Adrenal gland (tissue), 19 donors: ENCODE measurements at regions of chr1 and their contacts with region 1.

Region 1: DNA sequence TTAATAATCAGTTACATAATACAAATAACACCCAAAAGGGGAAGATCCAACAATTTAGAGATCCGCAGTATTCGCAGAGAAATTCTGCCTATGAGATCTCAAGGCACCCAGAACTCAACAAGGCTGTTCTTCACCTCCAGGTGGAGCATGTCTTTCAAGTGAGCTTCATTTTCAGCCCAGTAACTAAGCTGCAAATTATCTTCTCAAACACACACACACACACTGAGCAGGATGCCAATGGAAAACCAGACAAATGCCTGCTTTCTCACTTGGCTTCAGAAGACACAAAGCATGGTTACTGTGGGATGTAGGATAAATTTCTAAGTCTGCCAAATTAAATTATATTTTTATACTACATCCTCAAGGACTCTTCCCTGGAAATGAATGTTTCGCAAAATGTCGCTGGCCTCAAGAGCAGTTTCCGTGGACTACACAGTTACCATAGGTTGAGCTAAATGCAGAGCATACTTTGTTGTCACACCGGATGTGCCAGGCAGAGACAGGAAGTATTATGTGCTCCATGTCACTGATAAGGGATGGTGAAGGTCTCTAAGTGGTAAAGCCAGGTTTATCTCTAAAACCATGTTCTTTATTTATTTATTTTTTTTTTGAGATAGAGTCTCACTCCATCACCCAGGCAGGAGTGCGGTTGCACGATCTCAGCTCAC is 30.3 kb downstream of the UBR4 start:
- DNase-seq: peak in 2 of 7 donors; percentile 32 to 33
- H3K4me3 ChIP-seq: no peak overlapping the region
- H3K27ac ChIP-seq: no peak overlapping the region
- H3K4me1 ChIP-seq: no peaks in the 10 kb centered on the region
- H3K27me3 ChIP-seq: no peaks in the 10 kb centered on the region
- CTCF ChIP-seq: peak in 5 of 6 experiments; percentile 25 to 48 (median 35)
- POLR2A ChIP-seq: no peak

Region 2: DNA sequence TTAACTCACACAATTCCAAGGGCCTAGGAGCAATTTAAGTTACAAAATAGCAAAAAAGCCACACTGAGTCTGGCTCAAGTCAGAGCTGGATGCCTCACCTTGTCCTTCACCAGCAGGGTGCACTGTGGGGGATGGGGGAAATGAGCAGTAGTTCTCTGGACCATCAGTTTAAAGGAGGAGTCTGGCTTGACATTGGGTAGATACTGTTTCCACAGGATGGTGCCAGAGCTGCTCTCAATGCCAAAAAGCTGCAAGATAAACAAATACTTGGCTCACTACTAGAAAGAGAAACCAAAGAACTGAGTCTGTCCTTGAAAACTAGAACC is 52.8 kb after region 1 on chr1:
- intact Hi-C with region 1: loop called (anchors 5 to 10 kb)
- DNase-seq: peak; percentile 76 to 92 (median 89)
- H3K4me3 ChIP-seq: no peak overlapping the region
- H3K27ac ChIP-seq: peak overlapping the region in 3 of 5 donors; percentile 6 to 60 (median 59)
- H3K4me1 ChIP-seq: peaks cover 5 to 14% of the 10 kb centered on the region in 2 donors
- H3K27me3 ChIP-seq: no peaks in the 10 kb centered on the region
- CTCF ChIP-seq: peak in 3 of 6 experiments; percentile 19 to 35 (median 20)
- POLR2A ChIP-seq: no peak

Region 3: DNA sequence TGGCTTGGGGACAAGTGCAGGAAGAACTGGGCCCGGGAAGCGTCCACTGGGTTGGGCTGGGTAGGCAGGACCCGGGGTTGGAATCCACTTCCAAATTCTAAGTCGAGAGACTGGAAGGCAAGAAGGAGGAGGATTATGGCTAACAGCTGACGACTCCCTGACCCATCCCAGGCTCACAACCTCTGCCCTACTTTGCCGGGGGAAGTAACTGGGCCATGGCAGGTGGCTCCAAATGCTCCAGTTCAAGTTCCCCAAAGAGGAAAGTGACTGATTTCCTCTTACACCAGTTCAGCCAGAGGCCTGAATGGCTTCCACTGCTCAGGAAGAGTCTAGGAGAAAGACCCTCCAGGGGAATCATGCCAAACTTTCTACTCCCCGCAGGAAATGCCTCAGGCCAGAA is 60.1 kb after region 1 on chr1:
- intact Hi-C with region 1: loop called (anchors 5 to 10 kb)
- DNase-seq: no peak
- H3K4me3 ChIP-seq: no peak overlapping the region
- H3K27ac ChIP-seq: no peak overlapping the region
- H3K4me1 ChIP-seq: no peaks in the 10 kb centered on the region
- H3K27me3 ChIP-seq: no peaks in the 10 kb centered on the region
- CTCF ChIP-seq: no peak
- POLR2A ChIP-seq: no peak

Region 4: DNA sequence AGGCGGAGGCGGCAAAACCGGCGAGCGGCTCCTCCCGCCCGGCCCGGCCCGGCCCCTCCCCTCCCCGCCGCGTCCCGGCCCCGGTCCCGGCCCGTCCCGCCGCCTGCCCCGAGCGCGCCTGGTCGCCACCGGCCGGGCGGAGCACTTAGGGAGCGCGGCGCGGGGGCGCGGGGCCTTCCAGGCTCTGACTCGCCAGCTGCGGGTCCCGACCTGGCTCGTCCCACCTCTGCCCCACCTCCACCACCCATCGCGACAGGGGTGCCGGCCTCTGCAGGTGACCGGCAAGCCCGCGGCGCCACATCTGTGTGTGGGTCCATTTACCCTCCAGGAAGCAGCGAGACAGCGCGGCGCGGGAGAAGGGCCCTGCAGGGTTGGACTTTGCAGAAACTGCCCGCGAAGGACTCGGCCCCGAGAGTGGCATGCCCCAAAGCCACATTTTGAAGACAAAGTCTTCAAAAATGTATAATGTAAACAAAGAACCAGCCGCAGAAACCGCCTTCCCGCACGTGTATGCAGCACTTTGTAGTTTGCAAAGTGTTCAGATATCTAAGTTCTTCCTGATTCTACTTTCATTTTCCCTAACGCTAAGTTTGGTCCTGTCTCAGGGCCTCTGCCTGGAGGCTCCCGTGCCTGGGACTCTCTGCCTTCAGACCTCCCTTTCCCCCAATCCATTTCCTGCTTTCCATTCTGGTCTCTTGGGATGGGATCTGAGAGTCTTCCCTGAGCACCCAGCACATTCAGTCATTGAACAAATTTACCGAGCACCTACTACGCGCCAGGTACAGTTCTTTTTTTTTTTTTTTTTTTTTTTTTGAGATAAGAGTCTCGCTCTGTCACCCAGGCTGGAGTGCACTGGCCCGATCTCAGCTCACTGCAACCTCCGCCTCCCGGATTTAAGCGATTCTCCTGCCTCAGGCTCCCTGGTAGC is 620.4 kb after region 1 on chr1 and contains the start of gene TMCO4:
- intact Hi-C with region 1: no loop called
- DNase-seq: peak; percentile 53 to 67 (median 58)
- H3K4me3 ChIP-seq: peak within 1 kb of the TSS; percentile 28 to 92 (median 82)
- H3K27ac ChIP-seq: peak within 1 kb of the TSS; percentile 64 to 95 (median 79)
- H3K4me1 ChIP-seq: peaks cover 9% of the 10 kb centered on the region in 2 donors
- H3K27me3 ChIP-seq: no peaks in the 10 kb centered on the region
- CTCF ChIP-seq: no peak
- POLR2A ChIP-seq: peak in 1 of 2 donors; percentile 23
- total RNA-seq, gene TMCO4: 23.2 to 55.0 (median 38.1) TPM